PC-9 (cell line): ENCODE measurements at regions of chr7 and their contacts with region 1.

Region 1: DNA sequence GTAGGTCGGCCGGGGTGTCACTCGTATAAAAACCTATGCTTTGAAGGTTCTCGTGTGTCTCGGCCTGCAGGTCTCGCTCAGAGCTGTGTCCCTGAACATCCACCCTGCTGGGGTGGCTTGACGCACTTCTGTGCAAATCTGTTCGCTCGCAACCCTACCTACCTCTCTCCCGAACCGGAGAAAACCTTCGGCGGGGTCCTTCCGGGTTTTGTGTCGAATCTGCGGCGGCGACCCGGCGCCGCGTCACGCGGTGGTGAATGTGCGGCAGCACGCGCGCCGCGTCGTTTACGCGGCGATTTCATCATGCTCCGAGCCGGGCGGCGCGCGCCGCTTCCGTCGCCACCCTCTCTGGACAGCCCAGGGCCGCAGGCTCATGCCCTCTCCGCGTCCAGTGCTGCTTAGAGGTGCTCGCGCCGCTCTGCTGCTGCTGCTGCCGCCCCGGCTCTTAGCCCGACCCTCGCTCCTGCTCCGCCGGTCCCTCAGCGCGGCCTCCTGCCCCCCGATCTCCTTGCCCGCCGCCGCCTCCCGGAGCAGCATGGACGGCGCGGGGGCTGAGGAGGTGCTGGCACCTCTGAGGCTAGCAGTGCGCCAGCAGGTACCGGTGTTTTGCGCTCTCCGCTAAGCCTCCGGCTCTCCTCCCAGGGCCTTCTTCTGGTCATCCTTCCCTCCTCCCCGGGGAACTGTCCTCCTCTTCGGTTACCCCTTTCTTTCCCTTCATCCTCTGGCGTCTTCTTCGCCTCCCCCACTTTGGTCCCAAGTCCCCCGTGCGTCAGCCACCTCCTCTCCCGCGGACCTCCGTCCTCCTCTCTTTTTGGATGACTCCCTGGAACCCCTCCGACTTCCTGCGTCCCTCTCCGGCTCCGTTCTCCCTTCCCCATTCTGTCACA is at the start of gene GARS1:
- DNase-seq: peak; percentile 84 to 87
- H3K4me3 ChIP-seq: peak within 1 kb of the TSS; percentile 77
- H3K27ac ChIP-seq: peak within 1 kb of the TSS; percentile 83
- H3K4me1 ChIP-seq: peaks cover 22% of the 10 kb centered on the region
- H3K27me3 ChIP-seq: no peaks in the 10 kb centered on the region
- CTCF ChIP-seq: no peak
- total RNA-seq, gene GARS1: 272 and 274 TPM in 2 replicates

Region 2: DNA sequence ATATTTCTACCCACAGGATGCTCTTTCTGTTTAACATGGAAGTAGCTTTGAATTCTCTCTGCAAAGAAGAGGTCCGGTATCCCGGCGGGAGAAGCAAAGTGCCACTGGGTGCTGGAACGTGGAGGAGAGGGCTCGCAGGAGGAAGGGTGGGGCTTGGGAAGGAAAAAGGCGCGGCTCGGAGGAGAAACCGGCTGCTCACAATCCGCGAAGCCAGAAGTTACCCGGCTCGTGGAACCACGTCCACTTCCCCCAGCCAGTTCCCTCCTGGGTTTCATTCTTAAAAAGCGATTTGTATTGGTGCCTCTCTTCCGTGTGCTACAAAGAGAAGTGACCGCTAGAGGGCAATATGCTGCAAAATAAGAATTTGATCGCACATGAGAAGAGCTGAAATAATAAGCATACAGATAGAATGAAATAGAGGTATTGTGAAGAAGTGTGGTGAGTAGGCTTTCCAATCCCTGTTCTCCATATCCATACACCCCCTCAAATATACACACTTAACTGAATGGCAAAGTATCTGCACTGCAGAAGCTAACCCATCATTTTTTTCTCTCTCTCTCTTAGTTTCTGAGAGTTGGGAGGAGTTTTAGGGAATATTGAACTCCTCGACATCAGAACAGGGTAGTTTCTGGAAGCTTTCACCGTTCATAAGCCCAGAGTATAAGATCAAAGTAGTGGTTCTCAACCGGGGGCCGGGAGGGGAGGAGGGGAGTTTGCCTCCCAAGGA is 1667.8 kb before region 1 on chr7:
- CTCF ChIA-PET with region 1: interaction called, 11 read pairs
- POLR2A ChIA-PET with region 1: no interaction called
- intact Hi-C with region 1: no loop called
- DNase-seq: peak; percentile 45 to 82
- H3K4me3 ChIP-seq: peak overlapping the region; percentile 54
- H3K27ac ChIP-seq: no peak overlapping the region
- H3K4me1 ChIP-seq: peaks cover 13% of the 10 kb centered on the region; the same call in 1 of the 2 replicates
- H3K27me3 ChIP-seq: no peaks in the 10 kb centered on the region
- CTCF ChIP-seq: peak; percentile 97

Region 3: DNA sequence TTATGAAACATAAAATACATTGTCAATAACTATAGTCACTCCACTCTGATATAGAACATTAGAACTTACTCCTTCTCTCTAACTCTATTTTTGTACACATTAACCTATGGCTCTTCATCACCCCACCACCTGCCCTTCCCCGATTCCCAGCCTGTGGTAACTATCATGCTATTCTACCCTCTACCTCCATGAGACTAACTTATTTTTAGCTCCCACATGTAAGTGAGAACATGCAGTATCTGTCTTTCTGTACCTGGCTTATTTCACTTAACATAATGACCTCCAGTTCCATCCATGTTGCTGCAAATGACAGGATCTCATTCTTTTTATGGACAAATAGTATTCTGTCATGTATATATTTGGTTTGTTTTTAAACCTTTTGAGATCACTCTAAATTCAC is 107.4 kb before region 1 on chr7:
- CTCF ChIA-PET with region 1: no interaction called
- POLR2A ChIA-PET with region 1: no interaction called
- intact Hi-C with region 1: no loop called
- DNase-seq: no peak
- H3K4me3 ChIP-seq: no peak overlapping the region
- H3K27ac ChIP-seq: no peak overlapping the region
- H3K4me1 ChIP-seq: peaks cover 10% of the 10 kb centered on the region; the same call in 1 of the 2 replicates
- H3K27me3 ChIP-seq: no peaks in the 10 kb centered on the region
- CTCF ChIP-seq: no peak

Region 4: GRCh38 chr7:30548762-30549344 is 45.9 kb before region 1 on chr7:
- CTCF ChIA-PET with region 1: no interaction called
- POLR2A ChIA-PET with region 1: interaction called, 7 read pairs
- intact Hi-C with region 1: loop called (anchors 2 kb)
- DNase-seq: peak; percentile 61 to 73
- H3K4me3 ChIP-seq: no peak overlapping the region
- H3K27ac ChIP-seq: no peak overlapping the region
- H3K4me1 ChIP-seq: peaks cover 32% of the 10 kb centered on the region
- H3K27me3 ChIP-seq: no peaks in the 10 kb centered on the region
- CTCF ChIP-seq: peak; percentile 93

Region 5: GRCh38 chr7:30612658-30613265 is 18.0 kb after region 1 on chr7:
- CTCF ChIA-PET with region 1: no interaction called
- POLR2A ChIA-PET with region 1: no interaction called
- intact Hi-C with region 1: loop called (anchors 2 kb)
- DNase-seq: no peak
- H3K4me3 ChIP-seq: no peak overlapping the region
- H3K27ac ChIP-seq: no peak overlapping the region
- H3K4me1 ChIP-seq: no peaks in the 10 kb centered on the region
- H3K27me3 ChIP-seq: no peaks in the 10 kb centered on the region
- CTCF ChIP-seq: no peak

Region 6: GRCh38 chr7:30771174-30771879 is 176.5 kb after region 1 on chr7 and contains the start of gene MINDY4:
- CTCF ChIA-PET with region 1: no interaction called
- POLR2A ChIA-PET with region 1: interaction called, 24 read pairs
- intact Hi-C with region 1: no loop called
- DNase-seq: peak; percentile 65 to 88
- H3K4me3 ChIP-seq: peak within 1 kb of the TSS; percentile 91
- H3K27ac ChIP-seq: no peak within 1 kb of the TSS
- H3K4me1 ChIP-seq: peaks cover 25% of the 10 kb centered on the region
- H3K27me3 ChIP-seq: no peaks in the 10 kb centered on the region
- CTCF ChIP-seq: no peak; the same call in 1 of the 2 replicates
- total RNA-seq, gene MINDY4: 11.5 and 14.8 TPM in 2 replicates